ENCODE measurements at regions of chr17 and their contacts with region 1.

Region 1: DNA sequence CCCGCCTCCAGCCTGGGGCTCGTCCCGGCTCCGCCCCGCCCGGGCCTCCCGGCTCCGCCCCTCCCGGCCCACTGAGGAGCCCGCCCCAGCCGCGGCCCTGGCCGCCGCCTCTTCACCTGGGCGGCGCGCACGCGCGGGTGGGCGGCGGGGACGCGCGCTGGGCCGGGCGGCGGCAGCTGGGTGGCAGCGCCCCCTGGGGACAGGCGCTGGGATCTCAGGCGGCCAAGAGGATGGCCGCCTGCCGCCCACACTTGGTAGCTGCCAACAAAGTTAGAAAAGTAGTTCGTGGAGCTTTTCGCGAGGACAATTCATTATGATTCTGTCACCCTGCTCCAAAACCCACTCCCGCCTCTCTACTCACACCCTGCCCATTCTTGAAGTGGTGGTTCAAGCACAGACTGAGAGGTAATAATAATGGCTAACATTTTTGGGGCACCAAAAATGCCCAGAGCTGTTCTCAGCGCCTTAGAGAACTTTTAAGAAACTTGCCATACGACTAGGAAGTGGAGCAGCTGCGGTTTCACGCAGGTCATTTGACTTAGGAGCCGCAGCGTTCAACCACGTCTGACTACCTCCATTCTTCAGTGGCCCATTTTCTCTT is 340 bp upstream of the MYO1D start:
- DNase-seq: peak; percentile 60 to 96
- H3K4me3 ChIP-seq: peak overlapping the region; percentile 86; the same call in 1 of the 2 replicates
- H3K27ac ChIP-seq: no peak overlapping the region
- H3K4me1 ChIP-seq: peaks cover 14% of the 10 kb centered on the region
- H3K27me3 ChIP-seq: no peaks in the 10 kb centered on the region
- CTCF ChIP-seq: peak; percentile 66

Region 2: GRCh38 chr17:32828822-32829221 is 48.4 kb before region 1 on chr17:
- CTCF ChIA-PET with region 1: interaction called, 5 read pairs
- POLR2A ChIA-PET with region 1: interaction called, 3 read pairs
- intact Hi-C with region 1: loop called (anchors 10 kb)
- DNase-seq: no peak
- H3K4me3 ChIP-seq: no peak overlapping the region
- H3K27ac ChIP-seq: no peak overlapping the region
- H3K4me1 ChIP-seq: no peaks in the 10 kb centered on the region
- H3K27me3 ChIP-seq: no peaks in the 10 kb centered on the region
- CTCF ChIP-seq: no peak

Region 3: GRCh38 chr17:32862940-32863339 is 14.3 kb before region 1 on chr17:
- CTCF ChIA-PET with region 1: no interaction called
- POLR2A ChIA-PET with region 1: no interaction called
- intact Hi-C with region 1: no loop called
- DNase-seq: no peak
- H3K4me3 ChIP-seq: no peak overlapping the region
- H3K27ac ChIP-seq: no peak overlapping the region
- H3K4me1 ChIP-seq: no peaks in the 10 kb centered on the region
- H3K27me3 ChIP-seq: no peaks in the 10 kb centered on the region
- CTCF ChIP-seq: no peak

Region 4: DNA sequence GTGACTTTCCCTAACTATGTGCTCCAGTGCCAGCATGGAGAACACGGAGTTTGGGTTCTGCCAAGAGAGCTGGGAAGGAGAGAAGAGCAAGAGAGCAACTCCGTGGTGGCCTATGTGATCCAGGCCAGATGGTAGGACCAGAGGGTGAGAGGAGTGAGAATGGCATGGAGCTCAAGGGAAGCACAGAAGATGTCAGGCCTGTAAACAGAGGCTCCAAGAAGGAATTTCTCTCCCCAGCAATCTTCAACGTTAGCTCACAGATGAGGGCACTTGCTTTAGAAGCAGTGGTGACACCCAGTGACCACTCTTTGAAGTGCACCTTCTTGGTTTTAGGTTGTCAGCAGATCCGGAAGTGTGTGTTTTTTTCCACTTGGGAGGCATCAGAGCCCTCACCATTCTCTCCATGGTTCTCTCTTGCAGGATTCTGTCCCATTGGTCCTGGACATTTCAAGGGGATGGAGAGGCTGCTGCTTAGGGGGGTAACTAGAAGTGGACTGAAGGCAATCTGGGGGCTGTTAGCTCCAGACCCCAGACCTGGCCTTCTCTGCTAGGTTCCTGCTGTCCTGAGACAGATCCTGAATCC is 32.6 kb after region 1 on chr17:
- CTCF ChIA-PET with region 1: interaction called, 11 read pairs
- POLR2A ChIA-PET with region 1: interaction called, 10 read pairs
- intact Hi-C with region 1: no loop called
- DNase-seq: peak; percentile 43 to 58
- H3K4me3 ChIP-seq: no peak overlapping the region
- H3K27ac ChIP-seq: no peak overlapping the region
- H3K4me1 ChIP-seq: no peaks in the 10 kb centered on the region
- H3K27me3 ChIP-seq: peaks cover 25% of the 10 kb centered on the region; the same call in 1 of the 2 replicates
- CTCF ChIP-seq: peak; percentile 77

Measured in PC-9 (cell line).